ENCODE measurements at regions of chr4 and their contacts with region 1.

Region 1: GRCh38 chr4:54233277-54233696 is 4.2 kb downstream of the PDGFRA start:
- DNase-seq: peak; percentile 77
- H3K4me3 ChIP-seq: peak overlapping the region in 2 of 3 experiments; percentile 43 to 62
- H3K27ac ChIP-seq: no peak overlapping the region
- H3K4me1 ChIP-seq: peaks cover 24% of the 10 kb centered on the region
- H3K27me3 ChIP-seq: peaks cover 49 to 53% of the 10 kb centered on the region in 2 experiments
- CTCF ChIP-seq: peak; percentile 81 to 95
- POLR2A ChIP-seq: no peak

Region 2: DNA sequence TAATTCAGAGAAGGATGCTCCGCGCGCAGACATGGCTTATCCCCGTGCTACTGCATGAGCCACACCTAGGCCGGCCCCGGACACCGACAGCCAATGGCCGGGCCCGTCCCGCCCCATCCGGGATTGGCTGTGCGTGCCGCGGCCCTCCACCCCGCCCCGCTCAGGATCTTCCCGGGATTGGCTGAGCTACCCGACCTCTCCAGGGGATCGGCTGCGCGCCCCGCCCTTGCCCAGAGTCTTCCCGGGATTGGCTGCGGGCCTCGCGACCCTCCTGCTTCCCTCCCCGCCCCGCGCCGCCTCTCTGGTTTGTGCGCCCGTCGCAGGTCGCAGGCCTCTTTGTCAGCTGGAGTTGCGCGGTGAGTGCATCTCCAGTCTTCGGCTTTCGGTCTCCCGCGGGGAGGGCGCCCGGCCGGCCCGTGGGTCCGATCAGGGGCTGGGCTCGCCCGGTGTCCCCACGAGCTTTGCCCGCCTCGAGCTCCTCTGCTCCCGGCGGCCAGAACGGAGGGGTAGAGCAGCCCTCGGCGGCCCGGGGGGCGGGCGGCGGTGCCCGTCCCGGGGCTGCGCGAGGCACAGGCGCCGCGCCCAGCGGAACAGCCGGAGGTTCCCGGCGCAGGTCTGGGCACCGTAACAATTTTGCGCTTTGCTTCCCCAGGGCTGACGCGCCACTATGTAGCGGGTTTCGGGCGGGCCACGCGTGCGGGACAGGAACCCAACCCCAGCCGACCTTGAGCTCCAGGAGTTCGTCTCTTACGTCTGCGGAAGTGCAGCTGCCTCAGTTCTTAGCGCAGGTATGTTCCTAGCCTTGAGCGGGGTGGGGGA is 1520.9 kb before region 1 on chr4:
- CTCF ChIA-PET with region 1: interaction called, 12 read pairs
- POLR2A ChIA-PET with region 1: interaction called, 3 read pairs
- dilution Hi-C with region 1: no loop called
- intact Hi-C with region 1: loop called (anchors 5 kb)
- DNase-seq: peak; percentile 97
- H3K4me3 ChIP-seq: peak overlapping the region; percentile 61 to 86 (median 76)
- H3K27ac ChIP-seq: peak overlapping the region; percentile 73
- H3K4me1 ChIP-seq: peaks cover 30% of the 10 kb centered on the region
- H3K27me3 ChIP-seq: peaks cover 0 to 5% of the 10 kb centered on the region in 2 experiments
- CTCF ChIP-seq: no peak
- POLR2A ChIP-seq: peak; percentile 97

Region 3: DNA sequence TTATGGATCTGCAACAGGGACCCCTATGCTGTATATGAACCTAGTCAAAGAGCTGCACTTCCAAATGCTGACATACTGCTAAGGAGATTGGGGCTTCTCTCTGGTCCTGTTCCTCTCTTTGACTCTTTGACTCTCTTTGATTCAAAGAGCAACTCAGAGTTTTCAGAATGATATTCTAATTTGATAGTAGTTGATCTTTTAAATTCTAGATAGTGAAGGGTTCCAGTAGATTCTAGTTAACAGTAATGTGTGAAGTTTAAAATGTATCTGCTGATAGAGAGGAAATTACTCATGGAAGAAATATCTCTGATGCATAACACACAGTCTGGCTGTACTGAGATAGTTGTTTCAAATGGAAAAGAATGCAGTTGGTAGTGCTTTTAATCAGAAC is 1132.1 kb before region 1 on chr4:
- CTCF ChIA-PET with region 1: interaction called, 5 read pairs
- POLR2A ChIA-PET with region 1: no interaction called
- dilution Hi-C with region 1: no loop called
- intact Hi-C with region 1: loop called (anchors 5 kb)
- DNase-seq: peak; percentile 90
- H3K4me3 ChIP-seq: peak overlapping the region in 1 of 3 experiments; percentile 39
- H3K27ac ChIP-seq: peak overlapping the region; percentile 98
- H3K4me1 ChIP-seq: peaks cover 58% of the 10 kb centered on the region
- H3K27me3 ChIP-seq: no peaks in the 10 kb centered on the region
- CTCF ChIP-seq: no peak
- POLR2A ChIP-seq: no peak

Region 4: GRCh38 chr4:53424280-53424679 is 809.0 kb before region 1 on chr4:
- CTCF ChIA-PET with region 1: interaction called, 12 read pairs
- POLR2A ChIA-PET with region 1: no interaction called
- dilution Hi-C with region 1: no loop called
- intact Hi-C with region 1: no loop called
- DNase-seq: peak; percentile 6
- H3K4me3 ChIP-seq: no peak overlapping the region
- H3K27ac ChIP-seq: no peak overlapping the region
- H3K4me1 ChIP-seq: no peaks in the 10 kb centered on the region
- H3K27me3 ChIP-seq: no peaks in the 10 kb centered on the region
- CTCF ChIP-seq: no peak
- POLR2A ChIP-seq: no peak

Region 5: GRCh38 chr4:53656421-53657046 is 576.8 kb before region 1 on chr4:
- CTCF ChIA-PET with region 1: interaction called, 12 read pairs
- POLR2A ChIA-PET with region 1: no interaction called
- dilution Hi-C with region 1: no loop called
- intact Hi-C with region 1: no loop called
- DNase-seq: no peak
- H3K4me3 ChIP-seq: no peak overlapping the region
- H3K27ac ChIP-seq: no peak overlapping the region
- H3K4me1 ChIP-seq: no peaks in the 10 kb centered on the region
- H3K27me3 ChIP-seq: peaks cover 0 to 6% of the 10 kb centered on the region in 2 experiments
- CTCF ChIP-seq: peak; percentile 5 to 7
- POLR2A ChIP-seq: no peak

Region 6: GRCh38 chr4:53914313-53915016 is 318.8 kb before region 1 on chr4:
- CTCF ChIA-PET with region 1: interaction called, 198 read pairs
- POLR2A ChIA-PET with region 1: no interaction called
- dilution Hi-C with region 1: no loop called
- intact Hi-C with region 1: no loop called
- DNase-seq: peak; percentile 61
- H3K4me3 ChIP-seq: no peak overlapping the region
- H3K27ac ChIP-seq: peak overlapping the region; percentile 1
- H3K4me1 ChIP-seq: peaks cover 34% of the 10 kb centered on the region
- H3K27me3 ChIP-seq: no peaks in the 10 kb centered on the region
- CTCF ChIP-seq: no peak
- POLR2A ChIP-seq: no peak

Region 7: GRCh38 chr4:54077812-54078211 is 155.5 kb before region 1 on chr4:
- CTCF ChIA-PET with region 1: no interaction called
- POLR2A ChIA-PET with region 1: no interaction called
- dilution Hi-C with region 1: no loop called
- intact Hi-C with region 1: no loop called
- DNase-seq: peak; percentile 36
- H3K4me3 ChIP-seq: no peak overlapping the region
- H3K27ac ChIP-seq: peak overlapping the region; percentile 66
- H3K4me1 ChIP-seq: peaks cover 41% of the 10 kb centered on the region
- H3K27me3 ChIP-seq: no peaks in the 10 kb centered on the region
- CTCF ChIP-seq: no peak
- POLR2A ChIP-seq: no peak

Region 8: DNA sequence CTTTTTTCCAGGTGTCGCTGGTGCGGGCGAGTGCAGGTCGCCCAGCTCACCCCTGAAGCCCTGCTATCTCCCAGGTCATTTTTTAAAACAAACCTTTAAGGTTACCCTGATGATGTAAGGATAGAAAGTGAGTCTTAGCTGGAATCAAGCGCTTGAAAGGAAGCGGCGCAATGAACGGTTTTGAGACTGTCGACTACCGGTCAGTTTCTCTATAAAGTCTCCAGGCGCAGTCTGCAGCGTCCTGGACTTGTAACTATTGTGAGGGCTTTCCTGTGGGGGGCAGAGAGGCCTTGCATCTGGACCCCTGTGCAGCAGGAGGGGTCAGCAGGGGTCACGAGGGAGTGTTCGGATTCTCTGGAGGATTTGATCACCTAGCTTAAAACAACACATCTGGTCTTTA is 426.0 kb after region 1 on chr4:
- CTCF ChIA-PET with region 1: no interaction called
- POLR2A ChIA-PET with region 1: no interaction called
- dilution Hi-C with region 1: no loop called
- intact Hi-C with region 1: no loop called
- DNase-seq: peak; percentile 36
- H3K4me3 ChIP-seq: peak overlapping the region in 2 of 3 experiments; percentile 46 to 69
- H3K27ac ChIP-seq: no peak overlapping the region
- H3K4me1 ChIP-seq: peaks cover 16% of the 10 kb centered on the region
- H3K27me3 ChIP-seq: peaks cover 27 to 67% of the 10 kb centered on the region in 2 experiments
- CTCF ChIP-seq: no peak
- POLR2A ChIP-seq: no peak

Measured in endothelial cell of umbilical vein (primary cell).